ENCODE measurements at regions of chr3 and their contacts with region 1.

Region 1: DNA sequence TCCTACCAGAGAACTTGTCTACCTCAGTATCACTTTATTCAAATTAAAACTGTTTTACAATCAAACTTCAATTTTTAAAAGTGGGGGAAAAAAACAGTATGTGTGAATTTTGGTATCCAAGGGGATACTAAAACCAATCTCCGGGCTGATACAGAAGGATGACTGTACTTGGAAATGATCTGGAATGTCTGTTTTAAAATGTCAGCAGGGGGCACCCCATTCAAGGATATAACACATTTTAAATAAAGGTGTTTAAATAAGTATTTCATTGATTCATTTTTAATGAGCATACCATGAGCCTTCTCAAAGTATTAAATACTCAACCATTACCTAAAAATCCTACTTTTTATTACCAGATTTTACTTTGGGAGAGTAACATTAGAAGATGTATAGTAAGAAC is 67.9 kb downstream of the ULK4 start:
- DNase-seq: no peak
- H3K4me3 ChIP-seq: no peak overlapping the region
- H3K27ac ChIP-seq: no peak overlapping the region
- H3K4me1 ChIP-seq: no peaks in the 10 kb centered on the region
- H3K27me3 ChIP-seq: no peaks in the 10 kb centered on the region
- CTCF ChIP-seq: peak; percentile 38 to 49 (median 47)
- POLR2A ChIP-seq: no peak

Region 2: DNA sequence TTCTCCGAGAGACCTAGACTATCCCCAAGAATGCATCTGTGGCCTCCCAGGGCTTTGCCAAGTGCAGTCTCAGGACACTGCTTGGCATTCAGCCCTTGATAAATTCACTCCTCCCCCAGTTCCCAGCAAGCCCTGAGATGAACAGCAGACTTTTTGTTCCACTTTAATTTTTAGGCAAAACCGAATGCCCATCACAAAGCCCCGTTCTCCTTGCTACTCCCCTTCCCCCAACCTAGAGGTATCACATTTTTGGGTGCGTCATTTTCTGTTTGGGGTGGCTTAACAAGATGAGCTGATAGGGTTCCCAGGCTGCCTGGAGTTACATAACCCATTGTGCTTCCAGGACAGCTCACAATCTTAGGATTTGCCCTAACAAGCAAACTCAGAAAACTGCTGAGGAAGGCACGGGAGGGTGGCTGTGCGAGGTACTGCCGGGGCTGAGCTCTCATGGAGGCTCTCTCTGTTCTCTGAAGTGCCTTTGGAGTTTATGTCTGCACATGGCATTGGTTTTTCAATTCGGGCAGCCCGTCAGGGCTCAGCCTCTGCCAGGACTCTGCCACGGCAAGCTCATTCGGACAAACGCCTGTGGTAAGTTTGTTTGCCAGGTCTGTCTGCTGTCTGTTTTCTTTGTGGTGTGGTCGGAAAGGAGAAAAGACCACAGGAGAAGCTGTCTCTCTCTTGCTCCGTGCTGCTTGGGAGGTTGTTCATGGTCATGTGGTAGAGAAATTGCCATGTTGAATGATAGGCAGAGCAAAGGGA is 197.2 kb after region 1 on chr3 and contains the start of gene TRAK1:
- intact Hi-C with region 1: loop called (anchors 5 kb)
- DNase-seq: no peak
- H3K4me3 ChIP-seq: peak within 1 kb of the TSS; percentile 34 to 44
- H3K27ac ChIP-seq: peak within 1 kb of the TSS; percentile 83
- H3K4me1 ChIP-seq: peaks cover 31% of the 10 kb centered on the region
- H3K27me3 ChIP-seq: no peaks in the 10 kb centered on the region
- CTCF ChIP-seq: no peak
- POLR2A ChIP-seq: no peak
- total RNA-seq, gene TRAK1: 36.8 TPM

Region 3: GRCh38 chr3:42184651-42185443 is 290.9 kb after region 1 on chr3:
- intact Hi-C with region 1: loop called (anchors 10 kb)
- DNase-seq: no peak
- H3K4me3 ChIP-seq: no peak overlapping the region
- H3K27ac ChIP-seq: no peak overlapping the region
- H3K4me1 ChIP-seq: no peaks in the 10 kb centered on the region
- H3K27me3 ChIP-seq: no peaks in the 10 kb centered on the region
- CTCF ChIP-seq: no peak
- POLR2A ChIP-seq: no peak

Measured in vagina (tissue), 2 donors.